ENCODE measurements at regions of chr1 and their contacts with region 1.

Region 1: GRCh38 chr1:161766102-161766981 is at the start of gene ATF6:
- DNase-seq: peak; percentile 91
- H3K4me3 Mint-ChIP-seq: peak within 1 kb of the TSS; percentile 96
- H3K27ac Mint-ChIP-seq: peak within 1 kb of the TSS; percentile 97
- H3K4me1 Mint-ChIP-seq: peaks cover 41% of the 10 kb centered on the region
- H3K27me3 Mint-ChIP-seq: no peaks in the 10 kb centered on the region
- total RNA-seq, gene ATF6: 23.5 to 24.6 TPM

Region 2: DNA sequence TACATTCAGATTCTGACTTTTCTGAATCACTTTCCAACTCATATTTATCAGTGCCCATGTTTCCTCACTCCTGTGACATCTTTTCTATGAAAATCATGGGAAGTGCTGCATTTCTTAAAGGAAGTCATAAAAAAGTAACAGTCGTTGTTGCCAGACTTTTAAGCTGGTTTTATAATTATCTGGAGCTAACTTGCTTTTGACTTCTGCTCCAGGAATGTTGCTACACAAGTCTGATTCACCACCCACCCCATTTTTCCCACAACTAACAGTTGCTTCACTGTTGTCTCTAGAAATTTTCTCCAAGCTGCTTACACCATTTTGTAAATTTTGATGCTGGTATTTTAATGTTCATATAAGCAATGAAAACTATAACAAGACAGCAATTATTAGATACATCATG is 32.8 kb before region 1 on chr1:
- CTCF ChIA-PET with region 1: no interaction called
- intact Hi-C with region 1: no loop called
- DNase-seq: no peak
- H3K4me3 Mint-ChIP-seq: no peak overlapping the region
- H3K27ac Mint-ChIP-seq: no peak overlapping the region
- H3K4me1 Mint-ChIP-seq: peaks cover 34% of the 10 kb centered on the region
- H3K27me3 Mint-ChIP-seq: peaks cover 2% of the 10 kb centered on the region

Region 3: GRCh38 chr1:161915051-161915503 is 148.7 kb after region 1 on chr1:
- CTCF ChIA-PET with region 1: no interaction called
- intact Hi-C with region 1: loop called (anchors 1 kb)
- DNase-seq: peak; percentile 83
- H3K4me3 Mint-ChIP-seq: no peak overlapping the region
- H3K27ac Mint-ChIP-seq: no peak overlapping the region
- H3K4me1 Mint-ChIP-seq: peaks cover 35% of the 10 kb centered on the region
- H3K27me3 Mint-ChIP-seq: no peaks in the 10 kb centered on the region

Region 4: GRCh38 chr1:162023547-162024501 is 257.5 kb after region 1 on chr1 and contains the start of gene OLFML2B:
- CTCF ChIA-PET with region 1: interaction called, 9 read pairs
- intact Hi-C with region 1: loop called (anchors 2 kb)
- DNase-seq: peak; percentile 65
- H3K4me3 Mint-ChIP-seq: peak within 1 kb of the TSS; percentile 86
- H3K27ac Mint-ChIP-seq: no peak within 1 kb of the TSS
- H3K4me1 Mint-ChIP-seq: peaks cover 7% of the 10 kb centered on the region
- H3K27me3 Mint-ChIP-seq: peaks cover 18% of the 10 kb centered on the region
- total RNA-seq, gene OLFML2B: 1.7 to 2.3 TPM

Region 5: DNA sequence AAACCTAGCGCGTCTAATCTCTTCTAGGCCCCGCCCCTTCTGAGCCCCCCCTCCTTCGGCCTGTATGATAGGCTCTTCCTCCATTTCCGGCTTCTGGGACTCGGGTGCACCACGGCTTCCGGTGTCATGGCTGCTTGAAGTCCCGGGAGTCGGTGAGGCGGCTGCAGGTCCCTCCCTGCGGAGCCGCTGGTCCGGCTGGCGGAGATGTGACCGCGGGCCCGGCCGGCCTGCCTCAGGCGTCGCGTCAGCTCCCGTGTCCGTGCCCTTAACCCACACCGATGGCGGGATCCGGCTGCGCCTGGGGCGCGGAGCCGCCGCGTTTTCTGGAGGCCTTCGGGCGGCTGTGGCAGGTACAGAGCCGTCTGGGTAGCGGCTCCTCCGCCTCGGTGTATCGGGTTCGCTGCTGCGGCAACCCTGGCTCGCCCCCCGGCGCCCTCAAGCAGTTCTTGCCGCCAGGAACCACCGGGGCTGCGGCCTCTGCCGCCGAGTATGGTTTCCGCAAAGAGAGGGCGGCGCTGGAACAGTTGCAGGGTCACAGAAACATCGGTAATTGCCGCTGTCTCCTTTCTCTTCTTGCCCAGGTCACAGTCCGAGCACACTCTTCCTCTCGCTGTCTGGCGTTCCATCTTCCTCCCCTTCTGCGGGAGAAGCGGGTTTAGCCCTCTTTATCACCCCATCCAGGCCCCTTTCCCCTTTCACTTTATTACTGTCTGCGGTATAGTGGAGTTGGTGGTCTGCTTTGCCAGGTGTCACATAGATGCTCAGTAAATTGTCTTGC is 731.6 kb after region 1 on chr1 and contains the start of gene UHMK1:
- CTCF ChIA-PET with region 1: no interaction called
- intact Hi-C with region 1: loop called (anchors 10 kb)
- DNase-seq: peak; percentile 96
- H3K4me3 Mint-ChIP-seq: peak within 1 kb of the TSS; percentile 84
- H3K27ac Mint-ChIP-seq: peak within 1 kb of the TSS; percentile 89
- H3K4me1 Mint-ChIP-seq: peaks cover 38% of the 10 kb centered on the region
- H3K27me3 Mint-ChIP-seq: no peaks in the 10 kb centered on the region
- total RNA-seq, gene UHMK1: 43.4 to 43.7 TPM

Region 6: GRCh38 chr1:163346346-163346870 is 1580.1 kb after region 1 on chr1:
- CTCF ChIA-PET with region 1: no interaction called
- intact Hi-C with region 1: no loop called
- DNase-seq: no peak
- H3K4me3 Mint-ChIP-seq: no peak overlapping the region
- H3K27ac Mint-ChIP-seq: no peak overlapping the region
- H3K4me1 Mint-ChIP-seq: no peaks in the 10 kb centered on the region
- H3K27me3 Mint-ChIP-seq: no peaks in the 10 kb centered on the region